Caco-2 (cell line): ENCODE measurements at regions of chr1 and their contacts with region 1.

Region 1: GRCh38 chr1:165697881-165698760 is at the start of gene ALDH9A1:
- DNase-seq: peak; percentile 89 to 90
- H3K4me3 ChIP-seq: peak within 1 kb of the TSS; percentile 77
- H3K4me3 Mint-ChIP-seq: peak within 1 kb of the TSS; percentile 99
- H3K27ac Mint-ChIP-seq: peak within 1 kb of the TSS; percentile 94
- H3K4me1 ChIP-seq: peaks cover 10% of the 10 kb centered on the region; the same call in 1 of the 2 replicates
- H3K4me1 Mint-ChIP-seq: peaks cover 10% of the 10 kb centered on the region
- H3K27me3 ChIP-seq: no peaks in the 10 kb centered on the region
- H3K27me3 Mint-ChIP-seq: peaks cover 3% of the 10 kb centered on the region
- CTCF ChIP-seq: peak; percentile 23 to 37
- total RNA-seq, gene ALDH9A1: 28.4 and 33.9 TPM in 2 replicates

Region 2: GRCh38 chr1:165630629-165631341 is 67.3 kb before region 1 on chr1 and contains the start of gene MGST3:
- CTCF ChIA-PET with region 1: interaction called, 6 read pairs
- POLR2A ChIA-PET with region 1: no interaction called
- intact Hi-C with region 1: loop called (anchors 1 kb)
- DNase-seq: peak; percentile 96 to 97
- H3K4me3 ChIP-seq: peak within 1 kb of the TSS; percentile 72
- H3K4me3 Mint-ChIP-seq: no peak within 1 kb of the TSS
- H3K27ac Mint-ChIP-seq: no peak within 1 kb of the TSS
- H3K4me1 ChIP-seq: peaks cover 17% of the 10 kb centered on the region
- H3K4me1 Mint-ChIP-seq: peaks cover 26% of the 10 kb centered on the region
- H3K27me3 ChIP-seq: no peaks in the 10 kb centered on the region
- H3K27me3 Mint-ChIP-seq: no peaks in the 10 kb centered on the region
- CTCF ChIP-seq: no peak
- total RNA-seq, gene MGST3: 173 and 193 TPM in 2 replicates

Region 3: DNA sequence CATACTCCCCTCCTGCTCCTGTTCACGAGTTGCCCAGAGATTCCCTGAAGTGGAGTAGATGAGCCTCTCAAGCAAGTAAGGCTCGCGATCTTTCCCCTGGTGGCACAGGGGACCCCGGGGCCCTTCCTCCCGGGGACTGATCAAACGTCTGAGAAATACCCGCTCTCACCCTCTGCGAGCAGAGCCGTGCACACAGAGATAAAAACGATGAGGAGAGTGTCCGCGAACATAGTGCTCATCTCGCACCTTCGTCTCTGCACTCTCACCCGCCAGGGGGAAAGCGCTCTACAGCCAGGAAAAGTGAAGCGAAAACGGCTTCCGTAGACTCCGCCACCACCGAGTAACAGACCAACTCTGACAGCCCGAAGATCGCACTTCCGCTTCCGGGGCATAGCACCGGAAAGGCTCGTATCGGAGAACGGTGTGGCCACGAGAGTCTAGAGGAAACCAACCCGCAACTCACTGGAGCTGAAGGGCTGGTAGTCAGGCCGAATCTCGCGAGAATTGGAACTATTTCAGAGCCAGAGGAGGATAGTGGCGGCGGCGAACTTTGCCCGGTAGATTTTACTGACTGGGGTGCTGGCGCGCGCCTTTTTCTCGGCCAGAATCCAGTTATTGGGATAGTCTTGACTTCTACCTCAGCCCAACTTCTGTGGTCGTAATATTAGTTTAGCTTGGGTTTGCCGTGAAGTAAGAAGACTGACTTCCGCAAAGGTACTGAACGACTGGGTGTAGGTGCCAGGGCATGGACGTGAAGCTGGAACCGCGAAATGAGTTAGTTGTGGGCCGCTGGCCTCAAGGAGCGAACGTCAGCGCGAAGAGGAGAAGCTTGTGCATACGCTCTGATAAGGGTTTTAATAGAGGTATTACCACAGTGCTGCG is 70.6 kb after region 1 on chr1 and contains the start of gene TMCO1:
- CTCF ChIA-PET with region 1: no interaction called
- POLR2A ChIA-PET with region 1: no interaction called
- intact Hi-C with region 1: loop called (anchors 2 kb)
- DNase-seq: peak; percentile 95 to 98
- H3K4me3 ChIP-seq: peak within 1 kb of the TSS; percentile 73
- H3K4me3 Mint-ChIP-seq: peak within 1 kb of the TSS; percentile 94
- H3K27ac Mint-ChIP-seq: peak within 1 kb of the TSS; percentile 96
- H3K4me1 ChIP-seq: peaks cover 19% of the 10 kb centered on the region
- H3K4me1 Mint-ChIP-seq: peaks cover 37% of the 10 kb centered on the region
- H3K27me3 ChIP-seq: no peaks in the 10 kb centered on the region
- H3K27me3 Mint-ChIP-seq: no peaks in the 10 kb centered on the region
- CTCF ChIP-seq: no peak
- total RNA-seq, gene TMCO1: 138 and 152 TPM in 2 replicates

Region 4: GRCh38 chr1:165898837-165899236 is 200.7 kb after region 1 on chr1:
- CTCF ChIA-PET with region 1: no interaction called
- POLR2A ChIA-PET with region 1: interaction called, 10 read pairs
- intact Hi-C with region 1: no loop called
- DNase-seq: no peak
- H3K4me3 ChIP-seq: no peak overlapping the region
- H3K4me3 Mint-ChIP-seq: no peak overlapping the region
- H3K27ac Mint-ChIP-seq: no peak overlapping the region
- H3K4me1 ChIP-seq: peaks cover 17% of the 10 kb centered on the region
- H3K4me1 Mint-ChIP-seq: peaks cover 32% of the 10 kb centered on the region
- H3K27me3 ChIP-seq: no peaks in the 10 kb centered on the region
- H3K27me3 Mint-ChIP-seq: no peaks in the 10 kb centered on the region
- CTCF ChIP-seq: no peak